Endothelial cell of umbilical vein (primary cell): ENCODE measurements at regions of chr9 and their contacts with region 1.

Region 1: GRCh38 chr9:107425101-107426045 is 64.2 kb downstream of the KLF4 start:
- DNase-seq: peak; percentile 65
- H3K4me3 ChIP-seq: peak overlapping the region in 1 of 3 experiments; percentile 12
- H3K27ac ChIP-seq: no peak overlapping the region
- H3K4me1 ChIP-seq: peaks cover 4% of the 10 kb centered on the region
- H3K27me3 ChIP-seq: no peaks in the 10 kb centered on the region
- CTCF ChIP-seq: peak; percentile 98 to 99
- POLR2A ChIP-seq: no peak

Region 2: GRCh38 chr9:107413315-107413714 is 12.1 kb before region 1 on chr9:
- CTCF ChIA-PET with region 1: interaction called, 14 read pairs
- POLR2A ChIA-PET with region 1: no interaction called
- dilution Hi-C with region 1: no loop called
- intact Hi-C with region 1: no loop called
- DNase-seq: no peak
- H3K4me3 ChIP-seq: no peak overlapping the region
- H3K27ac ChIP-seq: no peak overlapping the region
- H3K4me1 ChIP-seq: no peaks in the 10 kb centered on the region
- H3K27me3 ChIP-seq: no peaks in the 10 kb centered on the region
- CTCF ChIP-seq: no peak
- POLR2A ChIP-seq: no peak

Region 3: GRCh38 chr9:107435415-107436170 is 10.2 kb after region 1 on chr9:
- CTCF ChIA-PET with region 1: interaction called, 12 read pairs
- POLR2A ChIA-PET with region 1: no interaction called
- dilution Hi-C with region 1: no loop called
- intact Hi-C with region 1: no loop called
- DNase-seq: no peak
- H3K4me3 ChIP-seq: no peak overlapping the region
- H3K27ac ChIP-seq: no peak overlapping the region
- H3K4me1 ChIP-seq: no peaks in the 10 kb centered on the region
- H3K27me3 ChIP-seq: peaks cover 0 to 3% of the 10 kb centered on the region in 2 experiments
- CTCF ChIP-seq: no peak
- POLR2A ChIP-seq: no peak

Region 4: GRCh38 chr9:107443786-107444185 is 18.4 kb after region 1 on chr9:
- CTCF ChIA-PET with region 1: interaction called, 25 read pairs
- POLR2A ChIA-PET with region 1: no interaction called
- dilution Hi-C with region 1: no loop called
- intact Hi-C with region 1: no loop called
- DNase-seq: no peak
- H3K4me3 ChIP-seq: no peak overlapping the region
- H3K27ac ChIP-seq: no peak overlapping the region
- H3K4me1 ChIP-seq: no peaks in the 10 kb centered on the region
- H3K27me3 ChIP-seq: no peaks in the 10 kb centered on the region
- CTCF ChIP-seq: no peak
- POLR2A ChIP-seq: no peak

Region 5: DNA sequence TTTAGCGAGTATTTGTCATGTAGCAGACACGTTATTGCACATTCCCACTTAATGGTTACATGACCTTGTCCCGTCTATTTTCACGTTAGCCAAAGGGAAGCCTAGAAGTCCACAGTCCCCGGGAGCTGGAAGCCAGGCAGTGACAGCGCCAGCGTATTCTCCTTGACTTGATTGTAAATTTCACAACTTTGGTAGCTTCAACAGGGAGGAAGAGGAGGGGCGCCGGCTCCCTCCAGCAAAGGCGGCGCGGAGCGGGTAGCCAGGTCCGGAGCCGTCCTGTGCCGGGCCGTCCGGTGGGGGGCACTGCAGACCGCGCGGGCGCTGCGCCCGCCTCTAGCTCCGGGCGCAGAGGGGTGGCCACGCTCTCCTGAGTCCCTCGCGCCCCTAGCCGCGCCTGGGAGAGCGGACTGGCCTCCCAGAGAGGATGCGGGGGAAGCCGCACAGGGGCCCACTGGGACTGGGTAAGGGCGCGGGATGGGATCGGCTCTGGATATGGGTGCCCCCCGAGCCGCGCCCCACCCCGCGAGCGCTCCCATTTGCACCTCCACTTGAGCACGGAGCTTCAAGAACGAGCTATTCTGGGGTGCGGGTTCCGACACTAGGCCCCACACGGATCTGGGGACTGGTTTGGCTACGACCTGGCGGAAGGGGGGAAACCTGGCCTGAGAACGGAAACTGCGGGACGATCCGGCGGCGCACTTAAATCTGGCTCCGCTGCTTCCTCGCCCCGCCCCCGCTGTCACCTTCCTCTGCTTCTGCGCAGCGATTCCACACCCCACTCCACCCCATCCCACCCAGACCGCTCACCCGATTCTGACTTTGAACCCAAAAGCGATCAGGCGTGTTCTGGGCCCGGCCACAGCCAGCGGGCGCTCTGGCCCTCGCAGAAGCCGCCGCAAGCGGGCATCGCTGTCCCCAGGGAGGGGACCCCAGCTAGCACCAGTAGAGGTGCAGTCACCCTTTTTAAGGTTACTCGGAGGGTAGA is 40.4 kb after region 1 on chr9:
- CTCF ChIA-PET with region 1: interaction called, 11 read pairs
- POLR2A ChIA-PET with region 1: no interaction called
- dilution Hi-C with region 1: no loop called
- intact Hi-C with region 1: no loop called
- DNase-seq: peak; percentile 47
- H3K4me3 ChIP-seq: peak overlapping the region; percentile 32 to 57 (median 46)
- H3K27ac ChIP-seq: no peak overlapping the region
- H3K4me1 ChIP-seq: peaks cover 3% of the 10 kb centered on the region
- H3K27me3 ChIP-seq: peaks cover 0 to 3% of the 10 kb centered on the region in 2 experiments
- CTCF ChIP-seq: peak; percentile 86 to 88
- POLR2A ChIP-seq: no peak

Region 6: GRCh38 chr9:108813951-108814601 is 1388.7 kb after region 1 on chr9:
- CTCF ChIA-PET with region 1: interaction called, 12 read pairs
- POLR2A ChIA-PET with region 1: no interaction called
- dilution Hi-C with region 1: no loop called
- intact Hi-C with region 1: no loop called
- DNase-seq: peak; percentile 75
- H3K4me3 ChIP-seq: no peak overlapping the region
- H3K27ac ChIP-seq: no peak overlapping the region
- H3K4me1 ChIP-seq: peaks cover 4% of the 10 kb centered on the region
- H3K27me3 ChIP-seq: no peaks in the 10 kb centered on the region
- CTCF ChIP-seq: peak; percentile 38 to 64
- POLR2A ChIP-seq: no peak